OCI-LY7 (cell line): ENCODE measurements at regions of chr4 and their contacts with region 1.

Region 1: GRCh38 chr4:113657586-113658233 is 103.8 kb downstream of the CAMK2D start:
- DNase-seq: no peak
- H3K4me3 ChIP-seq: no peak overlapping the region
- H3K27ac ChIP-seq: no peak overlapping the region
- H3K4me1 ChIP-seq: no peaks in the 10 kb centered on the region
- CTCF ChIP-seq: no peak

Region 2: DNA sequence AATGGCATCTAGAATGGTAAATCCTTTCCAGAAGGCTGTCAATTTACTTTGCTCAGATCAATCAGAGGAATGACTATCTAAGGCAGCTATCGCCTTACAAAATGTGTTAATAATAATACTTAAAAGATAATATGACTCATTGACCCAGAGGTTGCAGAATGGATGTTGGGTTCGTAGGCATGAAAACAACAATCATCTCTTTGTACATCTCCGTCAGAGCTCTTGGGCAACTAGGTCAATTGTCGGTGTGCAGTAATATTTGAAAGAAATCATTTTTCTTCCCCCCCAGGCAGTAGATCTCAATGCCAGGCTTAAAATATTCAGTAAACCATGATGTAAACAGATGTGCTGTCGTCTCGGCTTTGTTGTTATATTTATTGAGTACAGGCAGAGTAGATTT is 61.3 kb before region 1 on chr4:
- CTCF ChIA-PET with region 1: no interaction called
- POLR2A ChIA-PET with region 1: no interaction called
- intact Hi-C with region 1: no loop called
- DNase-seq: no peak
- H3K4me3 ChIP-seq: no peak overlapping the region
- H3K27ac ChIP-seq: no peak overlapping the region
- H3K4me1 ChIP-seq: peaks cover 36% of the 10 kb centered on the region
- CTCF ChIP-seq: no peak

Region 3: DNA sequence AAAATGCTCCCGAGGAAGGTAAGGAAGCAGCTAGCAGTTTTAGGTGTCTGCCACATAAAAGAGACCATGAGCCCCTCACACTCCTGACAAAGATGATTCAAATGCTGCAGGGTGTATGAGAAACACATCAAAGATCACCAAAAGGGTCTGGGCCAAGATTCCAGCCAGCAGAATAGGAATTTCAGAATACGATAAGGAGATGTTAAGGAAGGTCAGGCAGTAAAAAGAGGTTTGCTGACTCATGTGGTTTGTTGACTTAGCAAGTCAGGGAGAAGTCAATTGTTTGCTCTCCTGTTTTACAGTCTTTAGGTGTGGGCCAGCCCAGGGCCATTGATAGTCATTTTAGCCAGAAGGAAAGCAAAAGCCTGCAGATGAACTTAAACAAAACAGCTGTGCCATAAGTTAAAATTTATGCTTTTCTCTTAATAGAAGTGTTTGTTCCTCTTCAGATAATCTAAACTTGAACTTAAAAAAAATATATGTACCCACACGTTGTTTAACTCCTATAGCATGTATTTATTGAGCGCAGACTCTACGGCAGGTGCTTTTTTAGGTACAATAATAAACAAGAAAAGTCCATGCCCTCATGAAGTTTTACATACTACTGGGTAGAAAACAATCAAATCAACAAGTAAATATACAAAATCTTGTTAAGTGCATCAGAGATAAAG is 11.8 kb before region 1 on chr4:
- CTCF ChIA-PET with region 1: interaction called, 7 read pairs
- POLR2A ChIA-PET with region 1: interaction called, 12 read pairs
- intact Hi-C with region 1: no loop called
- DNase-seq: no peak
- H3K4me3 ChIP-seq: no peak overlapping the region
- H3K27ac ChIP-seq: no peak overlapping the region
- H3K4me1 ChIP-seq: peaks cover 39% of the 10 kb centered on the region
- CTCF ChIP-seq: no peak

Region 4: GRCh38 chr4:114108869-114109268 is 451.2 kb after region 1 on chr4:
- CTCF ChIA-PET with region 1: no interaction called
- POLR2A ChIA-PET with region 1: no interaction called
- intact Hi-C with region 1: no loop called
- DNase-seq: no peak
- H3K4me3 ChIP-seq: no peak overlapping the region
- H3K27ac ChIP-seq: no peak overlapping the region
- H3K4me1 ChIP-seq: no peaks in the 10 kb centered on the region
- CTCF ChIP-seq: no peak